ENCODE measurements at regions of chr12 and their contacts with region 1.

Region 1: GRCh38 chr12:49060237-49061156 is at the start of gene KMT2D:
- DNase-seq: peak; percentile 83 to 89
- ATAC-seq: peak; percentile 79
- H3K4me3 ChIP-seq: peak within 1 kb of the TSS; percentile 83 to 100 (median 94)
- H3K27ac ChIP-seq: peak within 1 kb of the TSS; percentile 97 to 100 (median 99)
- H3K4me1 ChIP-seq: peaks cover 41 to 45% of the 10 kb centered on the region in 2 donors
- H3K27me3 ChIP-seq: no peaks in the 10 kb centered on the region
- CTCF ChIP-seq: peak; percentile 36 to 83 (median 63)
- POLR2A ChIP-seq: peak; percentile 69 to 76
- total RNA-seq, gene KMT2D: 36.0 to 99.0 (median 71.3) TPM

Region 2: GRCh38 chr12:48640854-48641253 is 419.6 kb before region 1 on chr12:
- in situ Hi-C with region 1: no loop called
- intact Hi-C with region 1: no loop called
- DNase-seq: no peak
- ATAC-seq: peak in 1 of 2 donors; percentile 4
- H3K4me3 ChIP-seq: no peak overlapping the region
- H3K27ac ChIP-seq: no peak overlapping the region
- H3K4me1 ChIP-seq: no peaks in the 10 kb centered on the region
- H3K27me3 ChIP-seq: no peaks in the 10 kb centered on the region
- CTCF ChIP-seq: no peak
- POLR2A ChIP-seq: no peak

Region 3: DNA sequence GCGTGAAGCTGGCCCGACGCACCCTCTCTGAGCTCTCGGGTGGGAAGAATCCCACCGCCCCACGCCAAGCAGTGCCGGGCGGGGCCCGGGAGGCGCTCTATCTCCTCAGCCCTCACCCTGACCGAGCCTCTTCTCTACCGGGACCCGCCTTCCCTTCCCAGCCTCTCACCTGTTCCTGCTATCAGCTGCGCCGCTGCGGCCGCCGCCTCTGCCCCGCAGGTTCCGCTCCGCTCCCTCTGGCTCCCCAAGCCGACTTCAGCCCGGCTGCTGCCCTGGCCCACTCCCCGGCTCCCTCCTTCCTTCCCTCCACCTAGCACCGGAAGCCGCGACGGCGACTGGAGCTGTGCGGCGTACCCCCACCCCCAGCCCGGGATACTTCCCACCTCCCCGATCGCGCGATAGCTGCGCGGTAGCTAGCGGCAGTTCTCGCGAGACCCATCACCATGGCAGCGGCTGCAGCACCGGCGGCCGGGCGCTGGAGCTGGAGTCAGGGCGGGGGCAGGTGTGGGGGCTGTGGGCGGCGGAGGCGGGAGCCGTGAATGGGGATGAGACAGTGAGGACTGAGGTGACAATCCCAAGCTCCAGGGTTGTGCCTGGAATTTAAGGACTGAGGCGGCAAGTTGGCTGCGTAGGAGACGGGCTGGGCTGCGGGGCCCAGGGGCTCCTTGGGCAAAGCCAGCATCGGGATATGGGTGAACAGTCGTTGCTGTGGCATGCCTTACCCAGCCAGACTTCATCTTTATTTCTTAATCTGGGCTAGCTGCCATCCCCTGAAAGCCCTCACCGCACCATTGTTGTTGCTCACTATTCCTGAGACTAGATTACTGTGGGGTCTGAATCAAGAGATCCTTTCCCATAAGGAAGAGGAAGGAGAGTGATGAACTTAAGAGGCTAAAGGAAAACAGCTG is 103.1 kb before region 1 on chr12 and contains the start of gene ARF3:
- in situ Hi-C with region 1: no loop called
- intact Hi-C with region 1: no loop called
- DNase-seq: peak; percentile 82 to 83
- ATAC-seq: peak; percentile 89 to 92
- H3K4me3 ChIP-seq: peak within 1 kb of the TSS; percentile 86 to 100 (median 88)
- H3K27ac ChIP-seq: peak within 1 kb of the TSS; percentile 58 to 81 (median 74)
- H3K4me1 ChIP-seq: peaks cover 15 to 16% of the 10 kb centered on the region in 2 donors
- H3K27me3 ChIP-seq: peaks cover 0 to 4% (median 0%) of the 10 kb centered on the region in 3 donors
- CTCF ChIP-seq: no peak
- POLR2A ChIP-seq: peak; percentile 41 to 43
- total RNA-seq, gene ARF3: 4.9 to 17.2 (median 13.5) TPM

Region 4: DNA sequence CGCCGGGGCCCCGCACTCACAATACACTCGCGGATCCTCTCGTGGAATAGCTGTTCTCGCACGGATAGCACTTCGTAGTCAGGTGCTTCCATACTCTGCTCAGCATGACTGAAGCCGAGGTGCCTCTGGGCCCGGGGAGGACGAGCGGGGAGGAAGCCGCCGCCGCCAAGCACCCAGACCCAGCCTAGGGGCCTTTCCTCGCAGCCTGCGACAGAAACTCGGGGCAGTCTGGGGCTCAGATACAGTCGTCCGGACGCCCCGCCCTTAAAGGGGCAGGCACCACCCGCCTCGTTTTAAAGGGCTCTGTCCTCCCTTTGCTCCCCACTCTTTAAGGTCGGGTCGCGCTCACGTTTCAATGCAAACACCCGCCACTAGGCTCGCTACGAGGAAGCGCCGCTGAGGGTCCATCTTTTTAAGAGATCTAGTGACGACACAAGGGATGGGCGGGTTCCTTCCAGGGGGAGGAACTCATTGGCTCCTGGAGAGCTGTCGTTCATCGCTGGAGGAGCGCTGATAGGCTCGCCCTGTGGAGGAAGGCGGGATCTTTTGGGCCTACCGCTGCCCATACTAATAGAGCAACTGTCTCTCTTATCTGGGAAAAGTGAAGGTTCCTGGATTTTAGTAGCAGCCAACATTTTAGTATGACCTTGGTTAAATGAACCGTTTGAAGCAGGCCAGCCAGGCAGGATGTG is 50.1 kb after region 1 on chr12 and contains the start of gene LMBR1L:
- in situ Hi-C with region 1: loop called in 2 of 4 experiments (anchors 10 kb)
- intact Hi-C with region 1: loop called (anchors 2 kb)
- DNase-seq: peak; percentile 97 to 98
- ATAC-seq: peak; percentile 97 to 98
- H3K4me3 ChIP-seq: peak within 1 kb of the TSS; percentile 81 to 99 (median 99)
- H3K27ac ChIP-seq: peak within 1 kb of the TSS; percentile 92 to 100 (median 100)
- H3K4me1 ChIP-seq: peaks cover 43 to 48% of the 10 kb centered on the region in 2 donors
- H3K27me3 ChIP-seq: no peaks in the 10 kb centered on the region
- CTCF ChIP-seq: peak; percentile 50 to 67 (median 56)
- POLR2A ChIP-seq: peak; percentile 80 to 97
- total RNA-seq, gene LMBR1L: 11.1 to 27.2 (median 15.9) TPM